ENCODE measurements at regions of chr19 and their contacts with region 1.

Region 1: DNA sequence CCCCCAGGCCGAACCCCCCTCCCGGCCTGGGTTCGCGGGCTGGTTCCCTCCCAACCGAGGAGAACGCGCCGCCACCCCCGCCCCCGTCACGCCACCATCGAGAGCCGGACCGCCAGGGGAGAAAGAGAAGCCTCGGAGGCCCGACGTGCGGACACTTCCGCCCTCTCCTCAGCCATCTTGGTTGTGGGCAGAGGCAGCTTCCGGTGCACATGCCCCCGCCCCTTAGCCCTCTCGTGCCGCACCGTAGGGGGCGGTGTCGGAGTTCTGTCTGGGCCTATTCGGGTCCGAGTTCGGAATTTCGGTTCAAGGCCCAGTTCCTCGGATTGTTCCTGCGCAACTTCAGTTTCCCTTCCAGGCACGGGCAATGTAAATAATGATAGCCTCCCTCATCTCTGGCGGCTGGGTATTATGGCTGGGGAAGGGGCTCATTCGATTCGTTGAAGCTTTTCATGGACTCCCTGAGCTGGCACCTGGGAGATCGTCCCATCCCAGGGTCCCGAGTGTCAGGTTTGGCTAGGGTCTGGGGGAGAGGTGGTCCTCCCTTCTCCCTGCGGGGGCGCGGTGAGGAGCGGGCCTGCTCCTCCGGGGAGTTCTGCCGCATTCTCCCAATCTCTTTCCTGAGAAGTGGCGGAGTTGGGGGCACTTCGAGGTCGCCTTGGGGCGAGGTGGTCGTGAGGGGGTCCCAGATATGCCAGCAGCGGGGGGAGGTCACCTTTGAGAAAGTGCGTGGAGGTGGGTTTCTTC is at the starts of genes IER2 and STX10:
- DNase-seq: peak; percentile 97
- ATAC-seq: peak; percentile 41
- H3K4me3 ChIP-seq: peak within 1 kb of the TSS; percentile 83
- H3K27ac ChIP-seq: peak within 1 kb of the TSS; percentile 66
- H3K4me1 ChIP-seq: peaks cover 11% of the 10 kb centered on the region; the same call in 1 of the 2 replicates
- H3K27me3 ChIP-seq: no peaks in the 10 kb centered on the region
- CTCF ChIP-seq: peak; percentile 70
- total RNA-seq, gene IER2: 155 and 191 TPM in 2 replicates
- total RNA-seq, gene STX10: 179 and 243 TPM in 2 replicates

Region 2: GRCh38 chr19:12933287-12934072 is 216.9 kb before region 1 on chr19 and contains the start of gene FARSA:
- CTCF ChIA-PET with region 1: no interaction called
- POLR2A ChIA-PET with region 1: interaction called, 13 read pairs
- intact Hi-C with region 1: no loop called
- DNase-seq: peak; percentile 95
- ATAC-seq: peak; percentile 66
- H3K4me3 ChIP-seq: peak within 1 kb of the TSS; percentile 96
- H3K27ac ChIP-seq: peak within 1 kb of the TSS; percentile 58
- H3K4me1 ChIP-seq: peaks cover 23% of the 10 kb centered on the region
- H3K27me3 ChIP-seq: no peaks in the 10 kb centered on the region
- CTCF ChIP-seq: no peak
- total RNA-seq, gene FARSA: 194 and 339 TPM in 2 replicates

Region 3: DNA sequence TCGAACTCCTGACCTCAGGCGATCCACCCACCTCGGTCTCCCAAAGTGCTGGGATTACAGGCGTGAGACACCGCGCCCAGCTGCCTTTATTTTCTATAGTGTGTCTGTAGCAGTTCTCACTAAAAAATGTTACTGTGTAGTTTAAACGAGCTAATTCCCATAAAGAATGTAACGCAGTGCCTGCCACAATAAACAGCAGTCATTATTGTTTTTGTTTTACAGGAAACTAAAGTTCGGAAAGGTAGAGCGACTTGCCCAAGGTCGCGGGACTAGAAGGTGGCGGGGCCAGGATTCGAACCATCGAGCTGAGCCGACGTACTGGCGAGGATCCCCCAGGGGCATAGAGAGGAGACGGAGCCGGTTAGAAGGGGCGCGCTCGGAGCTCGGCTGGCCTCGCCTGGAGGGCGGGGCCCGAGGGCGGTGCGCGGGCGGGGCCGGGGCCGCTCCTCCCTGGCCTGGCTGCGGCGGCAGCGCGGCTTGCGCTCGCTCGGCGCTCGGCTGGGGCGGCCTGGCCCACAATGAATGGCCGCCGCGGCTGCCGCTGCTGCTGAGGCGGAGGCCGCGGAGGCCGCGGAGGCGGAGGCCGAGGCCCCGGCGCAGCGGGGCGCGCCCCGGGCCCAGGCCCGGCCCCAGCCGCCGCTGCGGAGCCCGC is 32.5 kb before region 1 on chr19 and contains the start of gene NACC1:
- CTCF ChIA-PET with region 1: no interaction called
- POLR2A ChIA-PET with region 1: interaction called, 3 read pairs
- intact Hi-C with region 1: loop called (anchors 1 kb)
- DNase-seq: peak; percentile 95
- ATAC-seq: peak; percentile 71
- H3K4me3 ChIP-seq: peak within 1 kb of the TSS; percentile 93
- H3K27ac ChIP-seq: peak within 1 kb of the TSS; percentile 81
- H3K4me1 ChIP-seq: peaks cover 38% of the 10 kb centered on the region
- H3K27me3 ChIP-seq: no peaks in the 10 kb centered on the region
- CTCF ChIP-seq: no peak
- total RNA-seq, gene NACC1: 266 and 337 TPM in 2 replicates

Region 4: DNA sequence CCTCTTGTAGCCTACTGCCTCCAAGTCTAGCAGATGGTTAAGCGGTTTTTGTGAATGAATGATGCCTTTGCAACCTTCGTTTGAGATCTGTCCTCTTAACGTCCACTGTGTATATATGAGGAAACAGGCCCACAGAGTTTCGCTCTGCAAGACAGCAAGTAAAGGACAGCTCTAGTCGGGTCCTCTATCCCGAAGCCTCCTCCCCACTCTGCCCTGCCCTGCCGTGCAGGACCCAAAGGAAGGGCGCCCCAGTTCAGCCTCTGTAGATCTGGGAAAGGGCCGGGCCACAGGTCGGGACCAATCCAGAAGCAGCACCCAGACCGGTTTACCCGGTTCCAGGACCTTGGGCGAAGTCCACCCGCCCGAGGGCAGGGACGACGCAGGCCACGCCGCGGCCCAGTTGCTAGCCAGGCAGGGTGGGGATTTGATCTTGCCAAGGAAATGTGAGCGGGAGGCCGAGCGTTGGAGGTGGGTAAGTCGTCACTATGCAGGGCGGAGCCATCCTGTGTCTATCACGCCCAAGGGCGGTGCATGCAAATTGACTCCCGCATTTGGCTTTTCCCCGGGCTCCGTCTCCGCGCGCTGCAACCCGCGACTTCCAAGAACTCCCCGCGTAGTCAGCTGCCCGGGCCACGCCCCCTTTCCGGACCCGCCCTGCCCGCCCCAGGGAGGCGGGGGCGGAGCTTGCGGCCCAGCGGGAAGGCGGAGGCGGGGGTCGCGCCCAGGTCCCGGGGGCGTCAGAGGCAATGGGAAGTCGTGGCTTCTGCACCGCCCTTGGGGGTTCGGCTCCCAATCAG is 12.4 kb after region 1 on chr19:
- CTCF ChIA-PET with region 1: interaction called, 3 read pairs
- POLR2A ChIA-PET with region 1: interaction called, 16 read pairs
- intact Hi-C with region 1: loop called (anchors 1 kb)
- DNase-seq: peak; percentile 100
- ATAC-seq: peak; percentile 50
- H3K4me3 ChIP-seq: peak overlapping the region; percentile 67
- H3K27ac ChIP-seq: peak overlapping the region; percentile 97
- H3K4me1 ChIP-seq: peaks cover 63% of the 10 kb centered on the region
- H3K27me3 ChIP-seq: no peaks in the 10 kb centered on the region
- CTCF ChIP-seq: no peak

Region 5: DNA sequence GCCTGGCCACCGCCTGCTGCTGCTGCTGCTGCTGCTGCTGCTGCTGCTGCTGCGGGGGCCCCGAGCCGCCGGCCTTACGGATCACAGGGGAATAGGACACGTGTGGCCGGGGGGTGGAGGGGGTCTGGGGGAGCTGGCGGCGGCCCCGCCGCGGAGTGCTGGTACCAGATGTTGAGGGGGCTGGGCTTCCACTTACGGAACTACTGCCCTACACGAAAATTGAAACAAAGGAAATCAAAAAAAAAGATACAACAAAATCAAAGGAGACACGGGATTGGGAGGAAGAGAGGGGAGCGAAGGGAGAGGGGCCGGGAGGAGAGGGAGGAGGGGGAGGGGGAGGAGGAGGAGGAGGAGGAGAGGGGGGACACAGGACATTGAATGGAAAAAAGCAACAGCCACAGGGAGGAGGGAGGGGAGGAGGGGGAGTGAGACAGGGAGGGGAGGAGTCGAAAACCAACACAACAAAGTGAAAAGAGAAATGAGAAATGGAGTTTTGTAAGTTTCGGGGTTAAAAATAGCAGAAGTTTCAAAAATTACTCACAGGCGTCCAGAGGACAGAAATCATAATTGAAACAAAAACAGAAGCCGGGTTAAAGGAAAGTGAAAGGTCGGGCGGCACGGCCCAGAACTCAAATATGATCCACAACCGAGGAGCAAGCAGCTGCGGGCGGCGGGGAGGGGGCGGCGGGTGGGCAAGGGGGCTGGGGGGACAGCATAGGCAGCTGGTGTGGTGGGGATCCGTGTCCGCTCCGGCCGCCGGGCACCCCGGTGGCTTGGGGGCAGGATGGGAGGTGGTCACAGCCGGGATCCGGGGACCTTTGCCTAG is 57.7 kb after region 1 on chr19:
- CTCF ChIA-PET with region 1: no interaction called
- POLR2A ChIA-PET with region 1: no interaction called
- intact Hi-C with region 1: no loop called
- DNase-seq: no peak
- ATAC-seq: no peak
- H3K4me3 ChIP-seq: no peak overlapping the region
- H3K27ac ChIP-seq: no peak overlapping the region
- H3K4me1 ChIP-seq: no peaks in the 10 kb centered on the region
- H3K27me3 ChIP-seq: no peaks in the 10 kb centered on the region
- CTCF ChIP-seq: no peak

Region 6: GRCh38 chr19:13373602-13374001 is 223.2 kb after region 1 on chr19:
- CTCF ChIA-PET with region 1: no interaction called
- POLR2A ChIA-PET with region 1: no interaction called
- intact Hi-C with region 1: no loop called
- DNase-seq: no peak
- ATAC-seq: no peak
- H3K4me3 ChIP-seq: no peak overlapping the region
- H3K27ac ChIP-seq: no peak overlapping the region
- H3K4me1 ChIP-seq: no peaks in the 10 kb centered on the region
- H3K27me3 ChIP-seq: no peaks in the 10 kb centered on the region; the same call in 1 of the 2 replicates
- CTCF ChIP-seq: no peak; the same call in 1 of the 2 replicates